ENCODE measurements at regions of chr19 and their contacts with region 1.

Region 1: DNA sequence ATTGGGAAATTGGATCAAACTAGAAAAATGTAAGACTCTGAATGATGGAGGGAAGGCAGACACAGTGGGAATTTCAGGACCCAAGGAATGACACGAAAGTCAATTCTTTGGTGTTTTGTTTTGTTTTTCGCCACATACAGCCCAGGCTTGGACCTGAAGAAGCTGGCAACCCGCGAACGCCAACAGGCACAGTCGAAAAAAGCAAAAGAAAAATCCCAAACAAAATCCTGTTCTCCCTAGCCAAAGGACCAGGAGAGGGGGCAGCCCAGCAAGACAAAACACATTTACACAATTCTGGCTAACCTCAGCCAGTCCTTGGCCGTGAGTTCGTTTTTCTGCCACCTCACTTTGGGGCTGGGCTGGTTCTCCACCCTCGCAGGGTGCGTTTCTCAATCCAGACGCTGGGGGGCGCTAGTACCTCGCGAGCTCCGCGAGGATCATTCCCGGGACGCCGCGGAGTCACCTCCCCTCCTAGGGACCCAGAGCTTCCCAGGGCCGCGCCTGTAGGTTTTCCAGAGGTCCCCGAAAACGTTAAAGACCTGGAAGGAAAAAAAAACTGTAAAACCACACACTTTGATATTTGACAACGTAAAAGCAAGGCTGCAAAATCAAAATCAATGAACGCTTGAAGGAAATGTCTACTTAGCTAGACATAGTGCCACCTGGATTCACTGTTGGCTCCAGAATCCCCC is 34.9 kb upstream of the TPM4 start:
- DNase-seq: peak; percentile 74
- H3K4me3 ChIP-seq: no peak overlapping the region
- H3K27ac ChIP-seq: no peak overlapping the region
- H3K4me1 ChIP-seq: peaks cover 12% of the 10 kb centered on the region
- H3K27me3 ChIP-seq: no peaks in the 10 kb centered on the region
- CTCF ChIP-seq: peak; percentile 91 to 95
- POLR2A ChIP-seq: no peak

Region 2: GRCh38 chr19:16057062-16057461 is 15.6 kb after region 1 on chr19:
- CTCF ChIA-PET with region 1: interaction called, 84 read pairs
- POLR2A ChIA-PET with region 1: no interaction called
- dilution Hi-C with region 1: no loop called
- intact Hi-C with region 1: no loop called
- DNase-seq: no peak
- H3K4me3 ChIP-seq: no peak overlapping the region
- H3K27ac ChIP-seq: no peak overlapping the region
- H3K4me1 ChIP-seq: no peaks in the 10 kb centered on the region
- H3K27me3 ChIP-seq: peaks cover 0 to 6% of the 10 kb centered on the region in 2 experiments
- CTCF ChIP-seq: no peak
- POLR2A ChIP-seq: no peak

Region 3: GRCh38 chr19:16070366-16070990 is 29.0 kb after region 1 on chr19:
- CTCF ChIA-PET with region 1: interaction called, 84 read pairs
- POLR2A ChIA-PET with region 1: no interaction called
- dilution Hi-C with region 1: no loop called
- intact Hi-C with region 1: loop called (anchors 1 kb)
- DNase-seq: peak; percentile 81
- H3K4me3 ChIP-seq: peak overlapping the region in 1 of 3 experiments; percentile 3
- H3K27ac ChIP-seq: peak overlapping the region; percentile 86
- H3K4me1 ChIP-seq: peaks cover 49% of the 10 kb centered on the region
- H3K27me3 ChIP-seq: no peaks in the 10 kb centered on the region
- CTCF ChIP-seq: no peak
- POLR2A ChIP-seq: peak; percentile 65

Region 4: GRCh38 chr19:16088351-16089009 is 47.0 kb after region 1 on chr19:
- CTCF ChIA-PET with region 1: interaction called, 39 read pairs
- POLR2A ChIA-PET with region 1: no interaction called
- dilution Hi-C with region 1: no loop called
- intact Hi-C with region 1: loop called (anchors 2 kb)
- DNase-seq: no peak
- H3K4me3 ChIP-seq: no peak overlapping the region
- H3K27ac ChIP-seq: no peak overlapping the region
- H3K4me1 ChIP-seq: peaks cover 31% of the 10 kb centered on the region
- H3K27me3 ChIP-seq: no peaks in the 10 kb centered on the region
- CTCF ChIP-seq: peak in 1 of 2 donors; percentile 11
- POLR2A ChIP-seq: no peak

Region 5: DNA sequence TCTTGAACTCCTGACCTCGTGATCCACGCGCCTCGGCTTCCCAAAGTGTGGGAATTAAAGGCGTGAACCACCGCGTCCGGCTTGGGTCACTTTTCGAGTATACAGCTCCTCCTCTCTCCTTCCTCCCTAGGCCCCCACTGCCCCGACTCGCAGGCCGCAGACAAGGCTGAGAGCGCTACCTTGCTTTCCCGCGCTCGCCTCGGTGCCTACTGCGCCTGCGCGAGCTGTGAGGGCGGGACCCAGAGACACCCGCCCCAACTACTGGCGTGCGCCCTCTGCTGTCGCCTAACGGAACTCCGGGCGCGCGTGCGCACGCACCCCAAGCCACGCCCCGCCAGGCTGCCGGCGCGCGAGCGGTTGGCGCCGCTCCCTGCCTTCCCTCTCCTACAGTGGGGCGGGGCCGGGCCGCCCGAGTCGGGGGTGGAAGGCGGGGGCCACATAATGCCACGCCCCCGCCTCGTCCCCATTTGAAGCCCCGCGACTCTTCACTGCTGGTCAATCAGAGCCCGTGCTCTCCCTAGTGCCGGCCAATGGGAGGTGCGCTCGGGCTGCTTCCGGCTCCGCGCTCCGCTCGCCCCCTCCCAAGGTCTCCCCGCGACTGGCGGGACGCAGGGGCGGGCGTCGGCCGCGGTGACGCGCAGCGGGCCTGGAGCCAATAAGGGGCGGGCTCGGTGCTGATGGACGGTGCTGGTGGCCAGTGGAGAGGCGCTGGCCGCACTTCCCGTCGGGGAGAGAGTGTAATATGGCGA is 69.9 kb after region 1 on chr19 and contains the start of gene RAB8A:
- CTCF ChIA-PET with region 1: interaction called, 35 read pairs
- POLR2A ChIA-PET with region 1: interaction called, 3 read pairs
- dilution Hi-C with region 1: no loop called
- intact Hi-C with region 1: loop called (anchors 1 kb)
- DNase-seq: peak; percentile 100
- H3K4me3 ChIP-seq: peak within 1 kb of the TSS; percentile 75 to 96 (median 87)
- H3K27ac ChIP-seq: peak within 1 kb of the TSS; percentile 75
- H3K4me1 ChIP-seq: peaks cover 12% of the 10 kb centered on the region
- H3K27me3 ChIP-seq: no peaks in the 10 kb centered on the region
- CTCF ChIP-seq: peak; percentile 93 to 96
- POLR2A ChIP-seq: no peak
- total RNA-seq, gene RAB8A: 98.9 and 107 TPM in 2 replicates

Region 6: GRCh38 chr19:16376649-16377048 is 335.2 kb after region 1 on chr19:
- CTCF ChIA-PET with region 1: no interaction called
- POLR2A ChIA-PET with region 1: no interaction called
- dilution Hi-C with region 1: no loop called
- intact Hi-C with region 1: no loop called
- DNase-seq: no peak
- H3K4me3 ChIP-seq: no peak overlapping the region
- H3K27ac ChIP-seq: no peak overlapping the region
- H3K4me1 ChIP-seq: peaks cover 13% of the 10 kb centered on the region
- H3K27me3 ChIP-seq: no peaks in the 10 kb centered on the region
- CTCF ChIP-seq: peak; percentile 40 to 62
- POLR2A ChIP-seq: no peak

Measured in endothelial cell of umbilical vein (primary cell).